ENCODE measurements at regions of chr2 and their contacts with region 1.

Region 1: DNA sequence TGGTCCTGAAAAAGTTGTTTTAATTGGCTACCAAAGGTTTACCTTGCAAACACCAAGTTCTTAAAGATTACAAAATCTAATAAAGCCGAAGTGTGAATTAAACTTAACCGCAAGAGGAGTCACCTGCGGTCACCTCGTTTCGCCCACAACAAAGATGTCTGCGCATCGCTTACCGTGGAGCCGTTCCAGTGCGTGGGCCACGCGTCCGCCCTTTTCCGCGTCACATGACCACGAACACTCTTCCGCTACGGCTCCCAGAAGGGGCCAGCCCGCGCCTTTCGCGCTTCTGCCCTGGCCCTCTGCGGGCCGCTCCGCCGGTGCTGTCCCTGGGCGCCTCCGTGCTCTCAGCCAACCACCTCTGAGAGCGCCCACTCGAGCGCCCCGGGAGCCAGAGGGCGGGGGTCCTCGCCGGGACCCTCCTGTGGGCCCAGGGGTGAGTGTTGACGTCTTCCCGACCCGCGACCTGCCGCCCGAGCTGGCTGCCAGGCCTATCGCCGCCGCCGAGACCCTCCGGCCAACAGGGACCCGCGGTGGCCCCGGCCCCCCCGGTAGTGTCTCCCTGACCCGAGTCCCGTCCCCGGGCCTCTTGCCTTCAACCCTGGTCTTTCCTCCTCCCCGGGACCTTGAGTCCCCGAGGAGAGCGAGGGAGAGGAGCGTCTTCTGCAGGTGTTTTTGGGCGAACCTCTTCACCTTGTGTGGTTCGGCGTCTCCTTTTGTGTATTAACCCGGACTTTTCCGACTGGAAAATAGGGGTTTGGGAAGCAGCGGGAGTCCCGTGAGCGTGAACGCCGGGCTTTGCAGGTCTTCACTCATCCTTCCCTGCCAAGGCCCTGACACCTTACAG is at the start of gene MFF:
- DNase-seq: peak; percentile 86 to 98 (median 93)
- ATAC-seq: peak; percentile 96
- H3K4me3 ChIP-seq: peak within 1 kb of the TSS; percentile 75 to 81
- H3K4me3 Mint-ChIP-seq: peak within 1 kb of the TSS; percentile 95
- H3K27ac ChIP-seq: peak within 1 kb of the TSS; percentile 59 to 80
- H3K27ac Mint-ChIP-seq: peak within 1 kb of the TSS; percentile 91
- H3K4me1 ChIP-seq: peaks cover 25% of the 10 kb centered on the region
- H3K4me1 Mint-ChIP-seq: peaks cover 56% of the 10 kb centered on the region
- H3K27me3 ChIP-seq: no peaks in the 10 kb centered on the region
- H3K27me3 Mint-ChIP-seq: no peaks in the 10 kb centered on the region
- CTCF ChIP-seq: no peak
- total RNA-seq, gene MFF: 48.6 to 50.3 TPM

Region 2: DNA sequence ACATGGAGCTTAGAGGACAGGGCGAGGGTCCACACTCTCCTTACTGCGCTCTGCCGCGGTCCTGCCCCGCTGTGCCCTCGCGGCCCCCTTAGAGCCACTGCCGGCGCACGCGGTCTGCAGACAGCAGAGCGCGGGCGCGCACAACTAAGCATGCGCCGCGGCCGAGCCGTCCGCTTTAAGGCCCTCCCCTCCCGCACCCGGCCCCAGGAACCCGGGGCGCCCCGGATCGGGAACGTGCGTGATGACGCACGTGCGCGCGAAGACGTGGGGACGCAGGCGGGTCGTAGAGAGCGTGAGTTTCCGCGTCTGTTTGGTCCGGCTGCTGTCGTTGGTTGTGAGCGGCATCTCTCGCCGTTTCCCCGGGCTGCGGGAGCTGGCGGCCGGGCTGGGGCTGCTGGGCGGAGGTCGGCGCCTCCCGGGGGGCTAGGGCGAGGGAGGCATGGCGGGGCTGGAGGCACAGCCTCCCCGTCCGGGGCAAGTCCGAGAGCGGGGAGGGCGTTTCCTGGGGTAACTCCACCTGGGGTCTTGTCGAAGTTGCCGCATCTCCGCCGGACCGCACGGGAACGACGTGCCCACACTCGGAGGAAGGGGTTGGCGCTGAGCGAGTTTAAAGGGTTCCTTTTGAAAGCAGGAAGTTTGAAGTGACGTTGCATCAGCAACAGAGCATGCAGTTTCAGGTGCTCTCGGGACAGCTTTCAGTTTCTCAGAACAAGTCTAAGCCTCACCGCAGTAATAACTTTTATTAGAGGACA is 489.2 kb before region 1 on chr2 and contains the start of gene RHBDD1:
- CTCF ChIA-PET with region 1: no interaction called
- POLR2A ChIA-PET with region 1: no interaction called
- intact Hi-C with region 1: loop called in 1 of 2 experiments (anchors 2 kb)
- DNase-seq: peak; percentile 88 to 98 (median 94)
- ATAC-seq: peak; percentile 82
- H3K4me3 ChIP-seq: peak within 1 kb of the TSS; percentile 64 to 74
- H3K4me3 Mint-ChIP-seq: peak within 1 kb of the TSS; percentile 90
- H3K27ac ChIP-seq: peak within 1 kb of the TSS; percentile 94 to 97
- H3K27ac Mint-ChIP-seq: peak within 1 kb of the TSS; percentile 98
- H3K4me1 ChIP-seq: peaks cover 51% of the 10 kb centered on the region
- H3K4me1 Mint-ChIP-seq: peaks cover 61% of the 10 kb centered on the region
- H3K27me3 ChIP-seq: no peaks in the 10 kb centered on the region
- H3K27me3 Mint-ChIP-seq: no peaks in the 10 kb centered on the region
- CTCF ChIP-seq: no peak
- total RNA-seq, gene RHBDD1: 29.7 to 30.9 TPM

Region 3: GRCh38 chr2:227095346-227095745 is 229.9 kb before region 1 on chr2:
- CTCF ChIA-PET with region 1: no interaction called
- POLR2A ChIA-PET with region 1: no interaction called
- intact Hi-C with region 1: no loop called
- DNase-seq: no peak
- ATAC-seq: no peak
- H3K4me3 ChIP-seq: no peak overlapping the region
- H3K4me3 Mint-ChIP-seq: no peak overlapping the region
- H3K27ac ChIP-seq: no peak overlapping the region
- H3K27ac Mint-ChIP-seq: no peak overlapping the region
- H3K4me1 ChIP-seq: no peaks in the 10 kb centered on the region
- H3K4me1 Mint-ChIP-seq: no peaks in the 10 kb centered on the region
- H3K27me3 ChIP-seq: peaks cover 0 to 3% of the 10 kb centered on the region in 2 experiments
- H3K27me3 Mint-ChIP-seq: no peaks in the 10 kb centered on the region
- CTCF ChIP-seq: no peak

Region 4: DNA sequence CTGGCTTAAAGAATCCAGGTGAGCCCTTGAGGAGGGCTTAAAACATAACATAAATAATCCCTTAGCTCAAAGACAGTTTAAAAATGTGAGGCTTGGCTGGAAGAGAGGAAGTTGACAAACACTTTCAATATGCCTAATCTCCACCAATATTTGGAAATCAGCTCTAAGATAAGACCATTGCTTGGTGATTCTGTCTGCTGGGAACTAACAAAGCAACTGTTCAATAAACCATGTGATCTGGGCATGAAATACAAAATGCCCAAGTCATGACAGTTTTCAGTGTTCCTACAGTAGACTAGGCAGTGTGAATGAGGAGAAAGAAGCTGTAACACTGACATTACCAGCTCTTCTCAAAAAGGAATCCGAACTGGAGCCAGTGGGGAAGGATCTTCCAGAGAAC is 10.5 kb after region 1 on chr2:
- CTCF ChIA-PET with region 1: interaction called, 3 read pairs
- POLR2A ChIA-PET with region 1: interaction called, 3 read pairs
- intact Hi-C with region 1: loop called in 1 of 2 experiments (anchors 1 kb)
- DNase-seq: no peak
- ATAC-seq: no peak
- H3K4me3 ChIP-seq: no peak overlapping the region
- H3K4me3 Mint-ChIP-seq: no peak overlapping the region
- H3K27ac ChIP-seq: no peak overlapping the region
- H3K27ac Mint-ChIP-seq: no peak overlapping the region
- H3K4me1 ChIP-seq: no peaks in the 10 kb centered on the region
- H3K4me1 Mint-ChIP-seq: peaks cover 9% of the 10 kb centered on the region
- H3K27me3 ChIP-seq: no peaks in the 10 kb centered on the region
- H3K27me3 Mint-ChIP-seq: no peaks in the 10 kb centered on the region
- CTCF ChIP-seq: no peak